SK-N-SH (cell line): ENCODE measurements at regions of chr16 and their contacts with region 1.

Region 1: GRCh38 chr16:22297114-22297878 is at the start of gene POLR3E:
- DNase-seq: peak; percentile 96
- H3K4me3 ChIP-seq: peak within 1 kb of the TSS; percentile 78 to 84
- H3K27ac ChIP-seq: peak within 1 kb of the TSS; percentile 85 to 90
- H3K4me1 ChIP-seq: peaks cover 0 to 9% of the 10 kb centered on the region in 2 experiments; a peak in 1 of 4 replicates
- H3K27me3 ChIP-seq: no peaks in the 10 kb centered on the region
- CTCF ChIP-seq: peak; percentile 88
- EP300 ChIP-seq: peak in 1 of 2 experiments; percentile 54; a peak in 1 of 4 replicates
- RAD21 ChIP-seq: peak; percentile 87
- polyA plus RNA-seq, gene POLR3E: 57.4 and 59.6 TPM in 2 replicates

Region 2: DNA sequence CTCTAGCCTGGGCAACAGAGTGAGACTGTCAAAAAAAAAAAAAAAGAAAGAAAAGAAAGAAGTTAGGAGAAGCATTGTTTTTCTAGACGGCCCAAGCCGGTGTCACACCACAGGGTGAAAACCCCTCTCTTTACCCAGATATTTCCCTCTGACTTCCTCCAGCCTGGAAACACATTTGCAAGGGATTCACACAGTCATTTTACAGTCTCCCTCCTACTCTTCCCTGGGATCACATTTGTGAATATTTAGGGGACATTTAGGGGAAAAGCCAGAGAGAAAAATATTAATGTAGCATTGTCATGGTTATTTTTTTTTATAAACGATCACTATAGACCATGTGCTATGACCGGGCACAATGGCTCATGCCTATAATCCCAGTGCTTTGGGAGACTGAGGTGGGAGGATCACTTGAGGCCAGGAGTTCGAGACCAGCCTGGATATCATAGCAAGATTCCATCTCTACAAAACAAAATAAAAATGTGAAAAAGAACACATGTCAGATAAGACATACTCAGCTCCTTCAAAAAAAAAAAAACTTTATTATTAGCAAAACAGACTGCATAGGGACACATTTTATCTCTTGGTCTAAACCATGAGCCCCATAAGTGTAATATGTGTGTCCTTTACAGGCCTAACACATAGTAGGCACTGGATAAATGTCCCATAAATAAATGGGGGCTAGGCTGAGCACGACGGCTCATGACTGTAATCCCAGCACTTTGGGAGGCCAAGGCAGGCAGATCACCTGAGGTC is 145.9 kb before region 1 on chr16:
- CTCF ChIA-PET with region 1: no interaction called
- POLR2A ChIA-PET with region 1: no interaction called
- DNase-seq: no peak
- H3K4me3 ChIP-seq: no peak overlapping the region
- H3K27ac ChIP-seq: no peak overlapping the region
- H3K4me1 ChIP-seq: no peaks in the 10 kb centered on the region
- H3K27me3 ChIP-seq: peaks cover 7% of the 10 kb centered on the region; the same call in 1 of the 2 replicates
- CTCF ChIP-seq: no peak
- EP300 ChIP-seq: no peak
- RAD21 ChIP-seq: no peak

Region 3: GRCh38 chr16:22312897-22313781 is 15.8 kb after region 1 on chr16:
- CTCF ChIA-PET with region 1: interaction called, 24 read pairs
- POLR2A ChIA-PET with region 1: no interaction called
- DNase-seq: no peak
- H3K4me3 ChIP-seq: no peak overlapping the region
- H3K27ac ChIP-seq: no peak overlapping the region
- H3K4me1 ChIP-seq: no peaks in the 10 kb centered on the region
- H3K27me3 ChIP-seq: no peaks in the 10 kb centered on the region
- CTCF ChIP-seq: no peak
- EP300 ChIP-seq: no peak
- RAD21 ChIP-seq: no peak

Region 4: DNA sequence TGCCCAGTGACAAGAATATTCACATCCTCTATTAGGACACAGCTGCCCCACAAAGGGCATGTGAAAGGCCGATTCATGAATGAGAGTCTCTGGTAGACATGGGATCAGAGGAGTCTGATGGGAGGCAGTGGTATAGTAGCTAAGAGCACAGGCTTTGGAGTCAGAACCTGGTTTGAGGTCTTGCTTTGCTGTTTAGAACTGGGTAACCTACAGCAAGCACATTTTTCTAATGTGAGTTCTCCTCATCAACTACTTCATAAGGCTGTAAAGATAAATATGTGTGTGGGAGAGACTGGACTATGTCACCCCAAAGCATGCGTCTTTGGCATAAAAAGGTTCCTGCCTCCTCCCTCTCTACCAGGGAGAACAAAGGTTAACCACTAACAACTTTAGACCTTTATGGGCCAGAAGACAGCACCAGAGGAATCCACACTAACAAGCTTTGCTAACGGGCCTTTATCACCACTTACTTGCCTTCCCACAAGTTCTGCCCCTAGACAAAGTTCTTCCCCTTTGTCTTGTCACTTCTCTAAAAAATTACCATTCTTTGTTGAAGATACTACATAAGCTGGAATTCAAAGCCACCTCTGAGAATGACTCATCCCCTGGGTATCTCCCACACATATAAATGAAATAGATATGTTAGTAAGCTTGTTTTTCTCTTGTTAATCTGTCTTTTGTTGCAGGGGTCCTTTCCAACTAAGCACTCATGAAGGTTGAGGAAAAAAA is 56.1 kb after region 1 on chr16:
- CTCF ChIA-PET with region 1: no interaction called
- POLR2A ChIA-PET with region 1: no interaction called
- DNase-seq: no peak
- H3K4me3 ChIP-seq: no peak overlapping the region
- H3K27ac ChIP-seq: peak overlapping the region; percentile 64 to 96; a peak in 3 of 4 replicates
- H3K4me1 ChIP-seq: peaks cover 3 to 20% of the 10 kb centered on the region in 2 experiments; a peak in 3 of 4 replicates
- H3K27me3 ChIP-seq: no peaks in the 10 kb centered on the region
- CTCF ChIP-seq: no peak
- EP300 ChIP-seq: no peak; a peak in 1 of 4 replicates
- RAD21 ChIP-seq: no peak